IMR-90 (cell line): ENCODE measurements at regions of chr1 and their contacts with region 1.

Region 1: DNA sequence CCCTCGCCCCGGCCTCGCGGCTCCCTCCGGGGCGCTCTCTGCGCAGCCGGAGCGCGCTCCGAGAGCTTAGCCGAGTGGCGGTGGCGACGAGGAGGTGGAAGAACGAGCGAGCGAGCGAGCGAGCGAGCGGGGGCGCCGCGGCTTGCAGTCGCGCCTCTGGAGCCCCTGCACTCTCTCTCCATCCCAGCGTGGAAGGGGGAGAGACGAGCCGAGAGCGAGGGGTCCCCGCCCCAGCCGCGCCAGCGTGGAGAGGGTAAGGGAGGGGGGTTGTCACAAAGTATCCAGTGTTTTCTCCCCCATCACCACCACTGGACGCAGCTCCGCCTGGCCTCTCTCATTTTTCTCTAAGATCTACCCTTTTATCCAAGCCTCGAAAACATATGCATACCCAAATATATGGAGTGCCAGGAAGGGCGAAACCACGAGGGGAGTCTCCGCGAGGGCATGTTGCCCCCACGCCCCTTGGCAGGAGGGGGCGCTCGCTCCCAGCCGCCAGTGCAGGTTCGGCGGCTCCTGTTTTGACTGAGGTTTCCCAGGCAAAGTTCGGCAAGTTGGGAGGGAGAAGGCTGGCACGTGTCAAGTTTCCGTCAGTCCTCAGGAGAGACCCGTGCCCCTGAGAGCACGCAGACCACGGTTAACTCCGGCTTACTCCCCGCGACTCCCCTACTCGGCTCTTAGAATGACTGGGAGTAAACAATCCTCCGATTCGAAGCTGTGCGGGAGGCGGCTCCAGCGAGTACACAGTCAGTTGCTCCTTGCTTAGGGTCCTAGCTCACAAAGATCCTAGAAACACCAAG is 569 bp upstream of the DAB1 start:
- DNase-seq: peak; percentile 41
- ATAC-seq: peak; percentile 57
- H3K4me3 ChIP-seq: peak overlapping the region; percentile 54
- H3K27ac ChIP-seq: no peak overlapping the region
- H3K4me1 ChIP-seq: no peaks in the 10 kb centered on the region
- H3K27me3 ChIP-seq: peaks cover 2% of the 10 kb centered on the region; the same call in 1 of the 2 replicates
- CTCF ChIP-seq: peak; percentile 74
- POLR2A ChIP-seq: no peak
- RAD21 ChIP-seq: peak; percentile 72

Region 2: GRCh38 chr1:56831871-56832693 is 592.3 kb before region 1 on chr1:
- CTCF ChIA-PET with region 1: interaction called, 3 read pairs
- POLR2A ChIA-PET with region 1: no interaction called
- dilution Hi-C with region 1: no loop called
- in situ Hi-C with region 1: no loop called
- intact Hi-C with region 1: loop called (anchors 1 kb)
- DNase-seq: peak; percentile 97
- ATAC-seq: peak; percentile 96
- H3K4me3 ChIP-seq: no peak overlapping the region
- H3K27ac ChIP-seq: peak overlapping the region; percentile 88
- H3K4me1 ChIP-seq: peaks cover 5% of the 10 kb centered on the region; the same call in 1 of the 2 replicates
- H3K27me3 ChIP-seq: no peaks in the 10 kb centered on the region
- CTCF ChIP-seq: peak; percentile 97
- POLR2A ChIP-seq: 0 out of 2 replicates have a peak, but pooled peaks have one; percentile 51
- RAD21 ChIP-seq: peak; percentile 98

Region 3: GRCh38 chr1:57252597-57253294 is 171.7 kb before region 1 on chr1:
- CTCF ChIA-PET with region 1: no interaction called
- POLR2A ChIA-PET with region 1: no interaction called
- dilution Hi-C with region 1: no loop called
- in situ Hi-C with region 1: no loop called
- intact Hi-C with region 1: no loop called
- DNase-seq: no peak
- ATAC-seq: no peak; the same call in 1 of the 2 replicates
- H3K4me3 ChIP-seq: no peak overlapping the region
- H3K27ac ChIP-seq: no peak overlapping the region
- H3K4me1 ChIP-seq: peaks cover 4% of the 10 kb centered on the region; the same call in 1 of the 2 replicates
- H3K27me3 ChIP-seq: no peaks in the 10 kb centered on the region
- CTCF ChIP-seq: no peak
- POLR2A ChIP-seq: no peak
- RAD21 ChIP-seq: no peak

Region 4: DNA sequence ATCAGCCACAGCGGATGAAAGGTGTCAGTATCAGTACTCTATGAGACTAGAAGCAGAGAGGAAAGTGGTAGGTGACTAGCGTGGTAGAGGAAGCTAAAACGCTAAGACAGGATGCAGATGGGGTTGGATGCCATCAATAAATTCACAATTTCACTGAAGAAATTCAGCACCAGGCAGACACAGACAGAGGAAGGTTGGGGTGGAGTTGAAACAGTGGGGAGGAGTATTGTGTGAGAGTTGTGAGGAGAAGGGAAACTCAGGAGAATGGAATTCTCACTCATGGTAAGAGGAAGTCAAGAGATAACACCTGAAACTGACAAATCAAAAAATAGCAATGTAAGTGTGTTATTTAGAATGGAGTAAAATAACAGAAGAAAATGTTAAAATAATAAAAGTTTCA is 208.0 kb after region 1 on chr1:
- CTCF ChIA-PET with region 1: no interaction called
- POLR2A ChIA-PET with region 1: no interaction called
- dilution Hi-C with region 1: no loop called
- in situ Hi-C with region 1: no loop called
- intact Hi-C with region 1: loop called (anchors 5 kb)
- DNase-seq: peak; percentile 19
- ATAC-seq: peak; percentile 61; the same call in 1 of the 2 replicates
- H3K4me3 ChIP-seq: no peak overlapping the region
- H3K27ac ChIP-seq: no peak overlapping the region
- H3K4me1 ChIP-seq: peaks cover 2% of the 10 kb centered on the region; the same call in 1 of the 2 replicates
- H3K27me3 ChIP-seq: no peaks in the 10 kb centered on the region
- CTCF ChIP-seq: no peak
- POLR2A ChIP-seq: no peak
- RAD21 ChIP-seq: no peak

Region 5: GRCh38 chr1:57889676-57890320 is 465.4 kb after region 1 on chr1:
- CTCF ChIA-PET with region 1: no interaction called
- POLR2A ChIA-PET with region 1: no interaction called
- dilution Hi-C with region 1: no loop called
- in situ Hi-C with region 1: no loop called
- intact Hi-C with region 1: loop called (anchors 1 kb)
- DNase-seq: no peak
- ATAC-seq: no peak
- H3K4me3 ChIP-seq: no peak overlapping the region
- H3K27ac ChIP-seq: no peak overlapping the region
- H3K4me1 ChIP-seq: no peaks in the 10 kb centered on the region
- H3K27me3 ChIP-seq: no peaks in the 10 kb centered on the region
- CTCF ChIP-seq: no peak
- POLR2A ChIP-seq: no peak
- RAD21 ChIP-seq: no peak

Region 6: GRCh38 chr1:58162952-58163550 is 738.6 kb after region 1 on chr1:
- CTCF ChIA-PET with region 1: no interaction called
- POLR2A ChIA-PET with region 1: no interaction called
- dilution Hi-C with region 1: no loop called
- in situ Hi-C with region 1: no loop called
- intact Hi-C with region 1: loop called (anchors 1 kb)
- DNase-seq: peak; percentile 52
- ATAC-seq: peak; percentile 92
- H3K4me3 ChIP-seq: no peak overlapping the region
- H3K27ac ChIP-seq: no peak overlapping the region
- H3K4me1 ChIP-seq: no peaks in the 10 kb centered on the region
- H3K27me3 ChIP-seq: no peaks in the 10 kb centered on the region
- CTCF ChIP-seq: peak; percentile 72
- POLR2A ChIP-seq: no peak
- RAD21 ChIP-seq: peak; percentile 63